Mammary epithelial cell (primary cell): ENCODE measurements at regions of chr6 and their contacts with region 1.

Region 1: DNA sequence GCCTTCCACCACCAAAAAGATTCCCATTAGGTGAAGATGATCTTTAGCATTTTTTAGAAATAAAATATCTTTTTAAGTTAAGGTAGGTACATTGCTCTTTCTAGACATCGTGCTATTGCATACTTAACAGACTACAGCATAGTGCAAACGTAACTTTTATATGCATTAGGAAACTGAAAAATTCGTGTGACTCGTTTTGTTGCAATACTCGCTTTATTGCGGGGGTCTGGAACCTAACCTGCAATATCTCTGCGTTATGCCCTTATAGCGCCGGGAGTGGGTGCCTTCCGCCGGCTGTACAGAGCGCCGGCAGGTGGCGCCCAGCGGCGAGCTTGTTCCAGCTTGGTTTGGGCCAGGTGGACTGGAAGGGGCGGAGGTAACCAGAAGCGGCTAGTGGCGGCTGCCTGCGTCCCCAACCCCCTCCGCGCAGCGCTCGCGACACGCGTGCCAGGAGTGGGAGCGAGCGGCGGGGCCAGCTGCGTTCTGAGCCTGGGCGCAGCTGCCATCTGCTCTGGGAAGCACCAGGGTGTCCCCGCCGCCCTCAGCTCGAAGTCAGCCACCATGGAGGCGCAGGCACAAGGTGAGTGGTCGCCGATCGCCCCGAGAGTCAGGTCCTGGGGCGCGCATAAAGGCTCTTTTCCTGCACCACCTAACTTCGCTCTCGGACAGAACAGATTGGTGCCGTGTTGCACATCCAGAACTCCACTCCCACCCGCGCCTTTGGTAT is at the start of gene TPD52L1:
- DNase-seq: peak; percentile 74
- H3K4me3 ChIP-seq: peak within 1 kb of the TSS; percentile 70 to 90 (median 77)
- H3K27ac ChIP-seq: peak within 1 kb of the TSS; percentile 55
- H3K4me1 ChIP-seq: peaks cover 35% of the 10 kb centered on the region
- H3K27me3 ChIP-seq: no peaks in the 10 kb centered on the region
- CTCF ChIP-seq: peak; percentile 91 to 97
- total RNA-seq, gene TPD52L1: 115 to 269 TPM

Region 2: DNA sequence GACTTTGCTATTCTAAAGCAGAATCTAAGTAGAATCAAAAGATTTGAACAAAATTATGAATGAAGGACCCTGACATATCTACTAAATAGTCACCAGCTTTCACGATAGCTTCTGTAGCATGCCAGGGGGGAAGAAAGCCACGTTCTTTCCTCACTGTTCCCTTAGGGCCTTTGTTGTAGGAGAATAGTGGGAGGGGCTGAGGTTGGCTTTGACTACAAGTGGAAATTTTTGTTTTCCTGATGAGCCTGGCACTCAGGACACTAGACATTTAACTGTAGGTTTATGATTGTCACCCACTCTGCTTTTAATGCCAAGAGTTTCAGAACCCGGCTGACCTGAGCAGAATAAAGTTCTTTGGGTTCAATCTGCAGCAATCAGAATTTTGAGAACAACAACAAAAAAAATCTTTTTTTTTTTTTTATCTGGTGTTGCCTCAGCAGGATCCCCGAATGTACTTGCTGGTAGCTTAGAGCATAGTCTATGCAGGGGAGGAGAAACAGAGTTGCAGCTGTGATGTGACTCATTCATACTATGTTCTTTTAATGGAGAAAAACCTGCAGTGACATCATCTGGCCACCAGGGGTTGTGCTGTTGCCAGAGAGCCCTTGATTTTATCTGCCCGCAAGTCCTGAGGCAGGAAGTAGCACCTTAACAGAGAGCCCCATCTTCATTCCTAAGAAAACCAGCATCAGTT is 38.5 kb after region 1 on chr6:
- CTCF ChIA-PET with region 1: interaction called, 3 read pairs
- dilution Hi-C with region 1: no loop called
- in situ Hi-C with region 1: no loop called
- intact Hi-C with region 1: loop called (anchors 1 kb)
- DNase-seq: peak; percentile 87
- H3K4me3 ChIP-seq: peak overlapping the region in 1 of 3 experiments; percentile 13
- H3K27ac ChIP-seq: peak overlapping the region; percentile 95
- H3K4me1 ChIP-seq: peaks cover 29% of the 10 kb centered on the region
- H3K27me3 ChIP-seq: no peaks in the 10 kb centered on the region
- CTCF ChIP-seq: peak; percentile 84

Region 3: DNA sequence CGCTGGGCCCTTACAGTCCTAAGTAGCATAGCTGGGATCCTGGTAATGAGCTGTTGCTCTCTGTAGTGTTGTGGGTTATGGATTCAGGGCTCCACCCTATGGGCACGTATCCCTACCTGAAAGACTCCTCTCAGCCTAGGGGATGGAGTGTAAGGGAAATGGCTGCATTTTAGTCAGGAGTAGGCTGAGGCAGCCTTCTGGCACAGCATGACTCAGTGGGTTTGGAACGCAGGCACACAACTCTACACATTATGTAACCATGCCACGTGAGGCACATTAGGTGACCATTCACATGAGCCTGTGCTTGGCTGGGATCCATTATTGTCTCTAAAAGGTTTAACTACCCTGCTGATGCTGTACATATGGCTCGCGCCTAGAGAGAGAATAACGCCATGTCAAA is 120.4 kb after region 1 on chr6:
- CTCF ChIA-PET with region 1: no interaction called
- dilution Hi-C with region 1: no loop called
- in situ Hi-C with region 1: loop called in 1 of 2 experiments (anchors 25 kb)
- intact Hi-C with region 1: loop called (anchors 1 kb)
- DNase-seq: peak; percentile 92
- H3K4me3 ChIP-seq: no peak overlapping the region
- H3K27ac ChIP-seq: peak overlapping the region; percentile 33
- H3K4me1 ChIP-seq: peaks cover 13% of the 10 kb centered on the region
- H3K27me3 ChIP-seq: no peaks in the 10 kb centered on the region
- CTCF ChIP-seq: peak in 1 of 2 donors; percentile 28

Region 4: GRCh38 chr6:125753218-125753936 is 599.8 kb after region 1 on chr6:
- CTCF ChIA-PET with region 1: no interaction called
- dilution Hi-C with region 1: no loop called
- in situ Hi-C with region 1: loop called in 1 of 2 experiments (anchors 25 kb)
- intact Hi-C with region 1: no loop called
- DNase-seq: no peak
- H3K4me3 ChIP-seq: no peak overlapping the region
- H3K27ac ChIP-seq: no peak overlapping the region
- H3K4me1 ChIP-seq: peaks cover 14% of the 10 kb centered on the region
- H3K27me3 ChIP-seq: peaks cover 21% of the 10 kb centered on the region
- CTCF ChIP-seq: peak; percentile 23 to 49

Region 5: GRCh38 chr6:125779924-125780539 is 626.5 kb after region 1 on chr6:
- CTCF ChIA-PET with region 1: interaction called, 3 read pairs
- dilution Hi-C with region 1: no loop called
- in situ Hi-C with region 1: loop called in 1 of 2 experiments (anchors 25 kb)
- intact Hi-C with region 1: no loop called
- DNase-seq: peak; percentile 86
- H3K4me3 ChIP-seq: peak overlapping the region; percentile 69 to 98 (median 85)
- H3K27ac ChIP-seq: peak overlapping the region; percentile 95
- H3K4me1 ChIP-seq: peaks cover 4% of the 10 kb centered on the region
- H3K27me3 ChIP-seq: peaks cover 2% of the 10 kb centered on the region
- CTCF ChIP-seq: peak in 1 of 2 donors; percentile 38